K562 (cell line): ENCODE measurements at regions of chr4 and their contacts with region 1.

Region 1: DNA sequence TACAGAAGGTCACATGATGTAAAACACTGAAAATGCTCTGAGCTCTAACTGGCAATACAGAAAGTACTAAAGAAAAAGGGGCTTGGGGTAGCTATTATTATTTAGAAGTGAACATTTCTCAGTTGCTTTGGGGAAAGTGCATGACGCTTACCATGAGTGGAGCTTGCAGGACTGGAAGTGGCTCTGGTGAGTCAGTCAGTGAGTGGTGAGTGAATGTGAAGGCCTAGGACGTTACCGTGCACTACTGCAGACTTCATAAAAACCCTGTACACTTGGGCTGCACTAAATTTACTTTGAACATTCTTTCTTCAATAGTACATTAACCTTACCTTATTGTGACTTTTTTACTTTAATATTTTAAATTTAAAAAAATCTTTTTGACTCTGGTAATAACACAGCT is 89.3 kb upstream of the ENPP6 start:
- DNase-seq: no peak
- ATAC-seq: no peak
- H3K4me3 ChIP-seq: no peak overlapping the region
- H3K27ac ChIP-seq: no peak overlapping the region
- H3K4me1 ChIP-seq: peaks cover 0 to 4% of the 10 kb centered on the region in 2 experiments; a peak in 2 of 5 replicates
- H3K27me3 ChIP-seq: no peaks in the 10 kb centered on the region
- CTCF ChIP-seq: no peak
- EP300 ChIP-seq: no peak
- POLR2A ChIP-seq: no peak
- RAD21 ChIP-seq: no peak

Region 2: GRCh38 chr4:184392748-184393334 is 85.9 kb after region 1 on chr4:
- CTCF ChIA-PET with region 1: no interaction called
- POLR2A ChIA-PET with region 1: no interaction called
- in situ Hi-C with region 1: loop called (anchors 5 kb)
- intact Hi-C with region 1: no loop called
- DNase-seq: no peak
- ATAC-seq: no peak
- H3K4me3 ChIP-seq: no peak overlapping the region
- H3K27ac ChIP-seq: no peak overlapping the region
- H3K4me1 ChIP-seq: peaks cover 8 to 10% of the 10 kb centered on the region in 2 experiments
- H3K27me3 ChIP-seq: no peaks in the 10 kb centered on the region
- CTCF ChIP-seq: no peak
- EP300 ChIP-seq: no peak
- POLR2A ChIP-seq: no peak
- RAD21 ChIP-seq: no peak

Region 3: GRCh38 chr4:184563621-184564020 is 256.7 kb after region 1 on chr4:
- CTCF ChIA-PET with region 1: no interaction called
- POLR2A ChIA-PET with region 1: no interaction called
- in situ Hi-C with region 1: no loop called
- intact Hi-C with region 1: no loop called
- DNase-seq: no peak
- ATAC-seq: no peak
- H3K4me3 ChIP-seq: no peak overlapping the region
- H3K27ac ChIP-seq: no peak overlapping the region
- H3K4me1 ChIP-seq: no peaks in the 10 kb centered on the region; a peak in 1 of 5 replicates
- H3K27me3 ChIP-seq: peaks cover 0 to 14% of the 10 kb centered on the region in 2 experiments; a peak in 1 of 5 replicates
- CTCF ChIP-seq: no peak
- EP300 ChIP-seq: no peak
- POLR2A ChIP-seq: no peak
- RAD21 ChIP-seq: no peak

Region 4: DNA sequence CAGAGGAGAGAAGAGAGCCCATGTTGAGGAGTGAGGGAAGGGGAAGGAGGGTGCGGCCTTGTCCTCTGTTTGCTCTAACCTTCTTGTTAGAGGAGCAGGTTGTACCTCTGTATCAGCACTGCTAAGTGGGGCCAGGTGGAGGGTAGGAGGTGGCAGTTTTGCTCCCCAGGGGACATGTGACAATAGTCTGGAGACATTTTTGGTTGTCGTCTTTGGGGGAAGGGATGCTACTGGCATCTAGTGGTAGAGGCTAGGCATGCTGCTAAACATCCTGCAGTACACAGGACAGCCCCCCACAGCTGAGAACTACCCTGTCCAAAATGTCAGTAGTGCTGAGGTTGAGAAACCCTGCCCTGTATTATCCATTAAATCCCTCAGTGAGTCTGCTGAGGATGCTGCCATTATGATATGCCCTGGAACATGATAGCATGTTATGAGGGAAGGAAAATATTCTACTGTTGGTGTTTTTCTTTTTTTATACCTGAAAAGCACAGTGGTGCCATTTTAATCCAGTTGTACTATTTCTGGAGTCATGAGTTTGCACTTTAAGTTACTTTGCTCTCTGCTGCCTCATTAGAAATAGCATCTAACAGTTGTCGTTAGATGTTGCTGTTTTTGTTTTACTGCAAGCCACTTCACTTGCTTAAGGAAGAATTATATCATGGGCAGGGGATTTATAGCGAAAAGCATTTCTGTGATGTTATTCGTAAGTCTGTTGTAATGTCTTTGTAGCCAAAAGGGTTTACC is 998.2 kb after region 1 on chr4:
- CTCF ChIA-PET with region 1: no interaction called
- POLR2A ChIA-PET with region 1: no interaction called
- in situ Hi-C with region 1: no loop called
- intact Hi-C with region 1: no loop called
- DNase-seq: peak in 1 of 4 experiments; percentile 52
- ATAC-seq: peak; percentile 92
- H3K4me3 ChIP-seq: no peak overlapping the region
- H3K27ac ChIP-seq: no peak overlapping the region
- H3K4me1 ChIP-seq: no peaks in the 10 kb centered on the region
- H3K27me3 ChIP-seq: no peaks in the 10 kb centered on the region
- CTCF ChIP-seq: peak; percentile 61 to 66 (median 66)
- EP300 ChIP-seq: no peak
- POLR2A ChIP-seq: no peak
- RAD21 ChIP-seq: peak; percentile 55 to 71